ENCODE measurements at regions of chr1 and their contacts with region 1.

Region 1: GRCh38 chr1:197356723-197357533 is 88.9 kb downstream of the CRB1 start:
- DNase-seq: peak in 4 of 5 donors; percentile 18 to 29 (median 28)
- H3K4me3 ChIP-seq: no peak overlapping the region
- H3K4me3 Mint-ChIP-seq: no peak overlapping the region
- H3K27ac ChIP-seq: no peak overlapping the region
- H3K27ac Mint-ChIP-seq: no peak overlapping the region
- H3K4me1 ChIP-seq: no peaks in the 10 kb centered on the region
- H3K4me1 Mint-ChIP-seq: peaks cover 0 to 3% (median 1%) of the 10 kb centered on the region in 4 donors
- H3K27me3 ChIP-seq: no peaks in the 10 kb centered on the region
- H3K27me3 Mint-ChIP-seq: no peaks in the 10 kb centered on the region

Region 2: GRCh38 chr1:197180252-197180878 is 176.6 kb before region 1 on chr1:
- CTCF ChIA-PET with region 1: interaction called, 63 read pairs
- POLR2A ChIA-PET with region 1: interaction called, 4 read pairs
- intact Hi-C with region 1: no loop called
- DNase-seq: peak in 4 of 5 donors; percentile 26 to 36 (median 32)
- H3K4me3 ChIP-seq: no peak overlapping the region
- H3K4me3 Mint-ChIP-seq: no peak overlapping the region
- H3K27ac ChIP-seq: no peak overlapping the region
- H3K27ac Mint-ChIP-seq: no peak overlapping the region
- H3K4me1 ChIP-seq: no peaks in the 10 kb centered on the region
- H3K4me1 Mint-ChIP-seq: peaks cover 0 to 8% (median 5%) of the 10 kb centered on the region in 4 donors
- H3K27me3 ChIP-seq: no peaks in the 10 kb centered on the region
- H3K27me3 Mint-ChIP-seq: no peaks in the 10 kb centered on the region

Region 3: DNA sequence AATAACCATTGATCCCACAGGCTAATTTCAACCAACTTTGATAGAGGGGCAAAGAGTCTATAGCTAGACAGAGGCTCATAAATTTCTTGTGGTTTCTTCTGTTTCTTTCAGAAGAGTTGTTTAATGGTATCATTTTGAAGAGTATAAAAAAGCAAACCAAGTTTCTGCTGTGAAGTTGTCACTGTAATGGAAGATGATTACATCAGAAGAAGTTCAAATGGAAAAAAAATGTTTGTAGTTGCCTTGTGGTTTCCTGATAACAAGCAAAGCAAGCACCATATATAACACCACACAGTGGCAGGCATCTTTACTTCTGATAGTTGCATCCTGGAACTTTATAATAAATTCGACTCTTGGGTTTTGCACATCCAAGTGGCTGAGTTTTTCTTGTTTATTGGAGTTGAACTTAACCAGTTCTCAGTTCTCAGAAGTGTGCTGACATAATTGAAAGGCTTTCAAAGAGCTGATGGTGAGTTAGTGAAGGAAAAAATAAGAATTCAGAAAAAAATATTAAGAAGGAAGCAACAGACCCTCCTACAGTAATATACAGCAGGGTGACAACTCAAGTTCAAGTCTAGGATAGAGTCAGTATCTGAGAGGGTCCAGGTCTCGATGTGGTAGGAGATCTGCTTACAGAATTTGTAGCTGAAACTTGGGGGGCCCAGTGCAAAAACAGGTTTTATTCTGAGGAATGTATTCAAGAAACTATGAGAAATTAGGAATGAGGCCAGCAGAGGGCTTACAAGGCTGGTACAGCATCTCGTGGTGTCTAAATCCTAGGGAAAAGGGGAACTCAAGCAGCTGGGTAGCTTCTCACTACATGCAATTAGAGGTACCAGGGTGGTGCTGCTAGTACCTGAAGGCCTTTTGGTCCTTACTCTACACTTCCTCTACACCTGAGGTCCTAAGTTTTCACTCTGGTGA is 34.6 kb after region 1 on chr1:
- CTCF ChIA-PET with region 1: interaction called, 6 read pairs
- POLR2A ChIA-PET with region 1: no interaction called
- intact Hi-C with region 1: loop called (anchors 5 kb)
- DNase-seq: peak; percentile 48 to 81 (median 75)
- H3K4me3 ChIP-seq: no peak overlapping the region
- H3K4me3 Mint-ChIP-seq: peak overlapping the region; percentile 2 to 72 (median 49)
- H3K27ac ChIP-seq: peak overlapping the region; percentile 25
- H3K27ac Mint-ChIP-seq: peak overlapping the region; percentile 58 to 96 (median 87)
- H3K4me1 ChIP-seq: peaks cover 43% of the 10 kb centered on the region
- H3K4me1 Mint-ChIP-seq: peaks cover 30 to 42% (median 36%) of the 10 kb centered on the region in 4 donors
- H3K27me3 ChIP-seq: no peaks in the 10 kb centered on the region
- H3K27me3 Mint-ChIP-seq: peaks cover 0 to under 1% of the 10 kb centered on the region in 2 donors

Region 4: DNA sequence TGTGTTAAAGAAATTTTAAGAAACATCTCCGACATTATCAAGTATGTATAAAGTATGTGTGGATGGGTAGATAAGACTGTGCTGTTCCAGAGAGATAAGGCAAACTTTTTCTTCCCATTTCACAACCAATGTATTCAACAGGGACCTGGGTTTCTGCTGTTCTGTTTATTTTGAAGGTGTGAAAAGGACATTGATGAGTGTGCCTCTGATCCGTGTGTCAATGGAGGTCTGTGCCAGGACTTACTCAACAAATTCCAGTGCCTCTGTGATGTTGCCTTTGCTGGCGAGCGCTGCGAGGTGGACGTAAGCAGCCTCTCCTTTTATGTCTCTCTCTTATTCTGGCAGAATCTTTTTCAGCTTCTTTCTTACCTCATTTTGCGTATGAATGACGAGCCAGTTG is 85.1 kb after region 1 on chr1:
- CTCF ChIA-PET with region 1: no interaction called
- POLR2A ChIA-PET with region 1: no interaction called
- intact Hi-C with region 1: no loop called
- DNase-seq: no peak
- H3K4me3 ChIP-seq: no peak overlapping the region
- H3K4me3 Mint-ChIP-seq: no peak overlapping the region
- H3K27ac ChIP-seq: no peak overlapping the region
- H3K27ac Mint-ChIP-seq: no peak overlapping the region
- H3K4me1 ChIP-seq: no peaks in the 10 kb centered on the region
- H3K4me1 Mint-ChIP-seq: no peaks in the 10 kb centered on the region
- H3K27me3 ChIP-seq: no peaks in the 10 kb centered on the region
- H3K27me3 Mint-ChIP-seq: peaks cover 2% of the 10 kb centered on the region in 2 donors